Activated CD8-positive, alpha-beta T cell treated with anti-CD3 and anti-CD28 coated beads for 36 hours (primary cell): ENCODE measurements at regions of chr5 and their contacts with region 1.

Region 1: DNA sequence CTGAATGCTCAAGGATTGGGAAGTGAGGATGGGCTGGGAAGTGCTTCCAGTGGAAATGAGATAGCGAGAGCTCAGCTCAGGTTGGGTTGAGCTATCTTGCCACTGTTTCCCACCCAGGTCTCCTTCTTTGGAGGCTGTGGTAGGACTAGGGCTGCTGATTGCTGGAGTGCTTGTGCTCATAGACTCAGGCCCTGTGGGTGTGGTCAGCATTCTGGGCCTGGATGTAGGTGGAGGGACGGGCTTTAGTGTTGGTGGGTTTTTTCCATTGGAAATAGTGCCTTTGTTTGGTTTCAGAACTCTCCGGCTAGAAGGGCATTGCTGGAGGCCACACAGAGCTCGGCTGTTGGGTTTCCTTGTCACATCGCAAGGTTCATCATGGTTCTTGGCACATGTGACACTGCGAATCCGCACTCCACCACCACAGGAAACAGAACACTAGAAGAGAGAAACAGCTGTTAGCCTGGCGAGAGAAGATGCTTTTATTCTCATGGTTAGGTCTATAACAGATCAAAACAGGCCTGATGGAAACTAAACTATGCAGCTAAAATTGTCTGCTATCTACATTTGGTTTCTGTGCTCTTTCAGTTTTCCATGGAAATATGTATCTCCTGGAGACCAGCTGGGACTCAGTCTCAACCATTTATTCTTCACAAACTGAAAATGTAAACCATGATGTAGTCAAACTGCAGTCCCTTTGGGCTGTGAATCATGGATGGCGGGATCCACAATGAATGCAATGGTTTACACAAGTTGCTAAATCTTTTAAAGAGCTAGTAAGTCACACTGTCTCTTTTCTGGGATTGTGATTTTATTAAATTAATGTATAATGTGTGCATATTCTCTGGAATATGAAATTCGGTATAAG is 136.2 kb downstream of the TARS1 start:
- DNase-seq: no peak
- ATAC-seq: no peak
- H3K4me3 Mint-ChIP-seq: no peak overlapping the region
- H3K27ac Mint-ChIP-seq: no peak overlapping the region
- H3K4me1 Mint-ChIP-seq: no peaks in the 10 kb centered on the region
- H3K27me3 Mint-ChIP-seq: peaks cover 2% of the 10 kb centered on the region
- CTCF ChIP-seq: no peak

Region 2: GRCh38 chr5:33470544-33470943 is 106.4 kb before region 1 on chr5:
- CTCF ChIA-PET with region 1: no interaction called
- POLR2A ChIA-PET with region 1: no interaction called
- intact Hi-C with region 1: no loop called
- DNase-seq: no peak
- ATAC-seq: no peak
- H3K4me3 Mint-ChIP-seq: no peak overlapping the region
- H3K27ac Mint-ChIP-seq: no peak overlapping the region
- H3K4me1 Mint-ChIP-seq: no peaks in the 10 kb centered on the region
- H3K27me3 Mint-ChIP-seq: no peaks in the 10 kb centered on the region
- CTCF ChIP-seq: no peak

Region 3: DNA sequence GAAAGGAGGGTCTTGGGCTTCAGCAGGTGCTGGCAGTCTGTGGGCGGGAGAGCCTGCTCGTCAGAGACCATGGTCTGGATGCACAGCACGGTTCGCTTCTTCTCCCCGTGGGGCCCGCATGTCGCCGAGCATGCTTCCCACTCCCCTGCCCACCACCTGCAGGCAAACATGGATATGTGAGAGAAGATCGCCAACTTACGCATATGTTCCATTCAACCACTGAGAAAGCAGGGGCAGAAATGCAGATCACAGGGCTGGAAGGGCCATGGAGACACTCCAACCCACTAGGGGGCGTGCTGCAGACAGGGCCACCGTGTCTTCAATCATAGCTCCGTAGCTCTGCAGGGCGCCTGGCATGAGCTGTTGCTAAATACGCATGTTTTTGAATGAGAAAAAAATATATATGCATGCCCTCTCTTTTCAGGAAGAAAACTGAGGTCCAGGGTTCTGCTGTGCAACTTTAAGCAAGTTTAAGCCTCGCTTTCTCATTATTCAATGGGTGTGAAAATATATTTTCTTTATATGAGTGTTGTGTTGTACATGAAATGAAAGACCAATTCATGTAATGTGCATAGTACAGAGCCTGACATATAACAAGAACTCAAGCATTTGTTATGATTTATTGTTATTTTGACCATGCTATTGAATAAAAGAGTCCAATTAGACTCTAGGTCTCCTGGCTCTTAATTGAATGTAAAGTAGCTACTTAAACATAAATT is 11.9 kb after region 1 on chr5:
- CTCF ChIA-PET with region 1: interaction called, 19 read pairs
- POLR2A ChIA-PET with region 1: no interaction called
- intact Hi-C with region 1: no loop called
- DNase-seq: peak; percentile 67
- ATAC-seq: peak; percentile 66
- H3K4me3 Mint-ChIP-seq: no peak overlapping the region
- H3K27ac Mint-ChIP-seq: no peak overlapping the region
- H3K4me1 Mint-ChIP-seq: no peaks in the 10 kb centered on the region
- H3K27me3 Mint-ChIP-seq: peaks cover 4% of the 10 kb centered on the region
- CTCF ChIP-seq: peak; percentile 65